ENCODE measurements at regions of chr3 and their contacts with region 1.

Region 1: GRCh38 chr3:106176734-106177133 is 307.9 kb upstream of the CBLB start:
- DNase-seq: peak; percentile 8 to 86 (median 52)
- ATAC-seq: peak; percentile 95
- H3K4me3 ChIP-seq: peak overlapping the region; percentile 24 to 25
- H3K4me3 Mint-ChIP-seq: peak overlapping the region; percentile 47
- H3K27ac ChIP-seq: peak overlapping the region; percentile 25 to 66
- H3K27ac Mint-ChIP-seq: peak overlapping the region; percentile 75
- H3K4me1 ChIP-seq: peaks cover 50% of the 10 kb centered on the region
- H3K4me1 Mint-ChIP-seq: peaks cover 57% of the 10 kb centered on the region
- H3K27me3 ChIP-seq: no peaks in the 10 kb centered on the region
- H3K27me3 Mint-ChIP-seq: no peaks in the 10 kb centered on the region
- CTCF ChIP-seq: no peak

Region 2: DNA sequence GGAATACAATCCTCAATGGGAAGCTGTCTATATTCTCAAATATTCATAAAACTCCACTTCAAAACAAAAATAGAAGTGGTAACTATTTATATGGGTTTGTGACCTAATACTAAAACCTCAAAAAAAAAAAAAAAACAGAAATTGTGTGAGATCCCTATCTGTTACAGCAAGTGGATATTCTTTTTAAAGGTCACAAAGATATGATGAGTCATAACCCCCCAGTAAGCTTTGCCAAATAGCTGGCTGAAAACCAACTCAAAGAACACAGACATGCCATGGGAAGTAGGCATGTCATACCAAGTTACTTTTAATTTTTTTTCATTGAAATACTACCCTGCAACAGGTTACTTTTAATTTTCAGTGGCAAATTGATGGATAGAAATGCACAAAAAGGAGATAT is 370.4 kb before region 1 on chr3:
- CTCF ChIA-PET with region 1: no interaction called
- POLR2A ChIA-PET with region 1: no interaction called
- intact Hi-C with region 1: loop called in 1 of 2 experiments (anchors 10 kb)
- DNase-seq: peak in 4 of 9 experiments; percentile 25 to 83 (median 58)
- ATAC-seq: peak; percentile 90
- H3K4me3 ChIP-seq: no peak overlapping the region
- H3K4me3 Mint-ChIP-seq: no peak overlapping the region
- H3K27ac ChIP-seq: peak overlapping the region in 1 of 2 experiments; percentile 2
- H3K27ac Mint-ChIP-seq: peak overlapping the region; percentile 60
- H3K4me1 ChIP-seq: peaks cover 23% of the 10 kb centered on the region
- H3K4me1 Mint-ChIP-seq: peaks cover 73% of the 10 kb centered on the region
- H3K27me3 ChIP-seq: no peaks in the 10 kb centered on the region
- H3K27me3 Mint-ChIP-seq: no peaks in the 10 kb centered on the region
- CTCF ChIP-seq: no peak

Region 3: GRCh38 chr3:106161246-106161645 is 15.5 kb before region 1 on chr3:
- CTCF ChIA-PET with region 1: no interaction called
- POLR2A ChIA-PET with region 1: no interaction called
- intact Hi-C with region 1: no loop called
- DNase-seq: no peak
- ATAC-seq: no peak
- H3K4me3 ChIP-seq: no peak overlapping the region
- H3K4me3 Mint-ChIP-seq: no peak overlapping the region
- H3K27ac ChIP-seq: no peak overlapping the region
- H3K27ac Mint-ChIP-seq: no peak overlapping the region
- H3K4me1 ChIP-seq: no peaks in the 10 kb centered on the region
- H3K4me1 Mint-ChIP-seq: no peaks in the 10 kb centered on the region
- H3K27me3 ChIP-seq: no peaks in the 10 kb centered on the region
- H3K27me3 Mint-ChIP-seq: no peaks in the 10 kb centered on the region
- CTCF ChIP-seq: no peak

Region 4: GRCh38 chr3:106197532-106198194 is 20.9 kb after region 1 on chr3:
- CTCF ChIA-PET with region 1: no interaction called
- POLR2A ChIA-PET with region 1: no interaction called
- intact Hi-C with region 1: loop called in 1 of 2 experiments (anchors 2 kb)
- DNase-seq: no peak
- ATAC-seq: no peak
- H3K4me3 ChIP-seq: no peak overlapping the region
- H3K4me3 Mint-ChIP-seq: no peak overlapping the region
- H3K27ac ChIP-seq: no peak overlapping the region
- H3K27ac Mint-ChIP-seq: peak overlapping the region; percentile 32
- H3K4me1 ChIP-seq: peaks cover 9% of the 10 kb centered on the region
- H3K4me1 Mint-ChIP-seq: peaks cover 20% of the 10 kb centered on the region
- H3K27me3 ChIP-seq: no peaks in the 10 kb centered on the region
- H3K27me3 Mint-ChIP-seq: no peaks in the 10 kb centered on the region
- CTCF ChIP-seq: no peak

Region 5: DNA sequence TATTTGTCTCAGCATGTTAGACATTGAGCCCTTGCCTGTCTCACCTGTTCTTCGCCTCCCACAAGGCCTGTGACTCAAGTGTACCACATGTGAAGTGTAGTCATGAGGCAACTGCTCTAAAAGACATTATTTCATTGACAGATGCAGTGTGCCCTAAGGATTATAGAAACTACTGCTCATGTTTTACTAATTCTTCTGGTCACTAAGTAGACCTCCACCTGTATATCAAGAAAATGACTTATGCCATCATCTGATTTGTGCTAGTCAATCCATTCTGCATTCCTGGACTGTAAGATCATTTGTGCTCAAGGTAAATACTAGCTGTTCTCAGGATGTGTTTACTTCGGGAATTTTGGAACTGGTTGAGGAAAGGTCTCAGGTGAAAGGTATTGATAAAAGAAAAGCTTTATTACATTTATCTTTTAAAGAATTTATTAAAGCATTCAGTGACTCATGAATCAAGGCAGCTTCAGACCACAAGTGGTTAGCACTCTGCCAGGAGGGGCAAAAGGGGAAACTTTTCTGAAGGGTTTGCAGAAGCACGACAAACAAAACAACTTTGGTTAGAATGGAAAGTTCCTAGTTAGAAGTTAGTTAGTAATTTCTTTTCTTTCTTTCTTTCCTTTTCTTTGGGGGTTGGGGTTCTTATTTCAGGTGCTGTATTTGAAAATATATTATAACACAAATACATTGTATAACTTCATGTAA is 157.3 kb after region 1 on chr3:
- CTCF ChIA-PET with region 1: no interaction called
- POLR2A ChIA-PET with region 1: no interaction called
- intact Hi-C with region 1: loop called in 1 of 2 experiments (anchors 10 kb)
- DNase-seq: peak in 5 of 9 experiments; percentile 13 to 64 (median 42)
- ATAC-seq: peak; percentile 63
- H3K4me3 ChIP-seq: no peak overlapping the region
- H3K4me3 Mint-ChIP-seq: peak overlapping the region; percentile 50
- H3K27ac ChIP-seq: peak overlapping the region in 1 of 2 experiments; percentile 50
- H3K27ac Mint-ChIP-seq: peak overlapping the region; percentile 66
- H3K4me1 ChIP-seq: peaks cover 28% of the 10 kb centered on the region
- H3K4me1 Mint-ChIP-seq: peaks cover 47% of the 10 kb centered on the region
- H3K27me3 ChIP-seq: no peaks in the 10 kb centered on the region
- H3K27me3 Mint-ChIP-seq: no peaks in the 10 kb centered on the region
- CTCF ChIP-seq: no peak